ENCODE measurements at regions of chr2 and their contacts with region 1.

Region 1: DNA sequence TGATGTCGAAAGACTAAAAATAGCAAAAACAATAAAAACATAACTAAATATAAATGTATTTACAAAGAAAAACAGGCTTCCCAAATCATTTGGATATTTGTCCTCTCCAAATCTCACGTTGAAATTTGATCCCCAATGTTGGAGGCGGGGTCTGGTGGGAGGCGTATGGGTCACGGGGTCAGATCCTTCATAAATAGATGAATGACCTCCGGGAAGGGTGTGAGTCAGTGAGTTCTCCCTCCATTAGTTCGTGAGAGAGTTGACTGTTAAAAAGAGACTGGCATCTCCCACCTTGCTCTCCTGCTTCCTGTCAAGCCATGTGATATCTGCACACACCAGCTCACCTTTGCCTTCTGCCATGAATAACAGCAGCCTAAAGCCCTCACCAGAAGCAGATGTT is 703.0 kb downstream of the TMEM182 start:
- DNase-seq: no peak
- H3K4me3 ChIP-seq: no peak overlapping the region
- H3K27ac ChIP-seq: no peak overlapping the region
- H3K4me1 ChIP-seq: no peaks in the 10 kb centered on the region
- H3K27me3 ChIP-seq: no peaks in the 10 kb centered on the region
- CTCF ChIP-seq: no peak
- POLR2A ChIP-seq: no peak

Region 2: GRCh38 chr2:102615622-102616436 is 849.0 kb before region 1 on chr2:
- intact Hi-C with region 1: loop called (anchors 5 kb)
- DNase-seq: no peak
- H3K4me3 ChIP-seq: no peak overlapping the region
- H3K27ac ChIP-seq: no peak overlapping the region
- H3K4me1 ChIP-seq: no peaks in the 10 kb centered on the region
- H3K27me3 ChIP-seq: peaks cover 0 to 36% of the 10 kb centered on the region in 2 donors
- CTCF ChIP-seq: peak in 2 of 3 donors; percentile 66 to 82
- POLR2A ChIP-seq: no peak

Measured in breast epithelium (tissue), 4 donors.